ENCODE measurements at regions of chr20 and their contacts with region 1.

Region 1: DNA sequence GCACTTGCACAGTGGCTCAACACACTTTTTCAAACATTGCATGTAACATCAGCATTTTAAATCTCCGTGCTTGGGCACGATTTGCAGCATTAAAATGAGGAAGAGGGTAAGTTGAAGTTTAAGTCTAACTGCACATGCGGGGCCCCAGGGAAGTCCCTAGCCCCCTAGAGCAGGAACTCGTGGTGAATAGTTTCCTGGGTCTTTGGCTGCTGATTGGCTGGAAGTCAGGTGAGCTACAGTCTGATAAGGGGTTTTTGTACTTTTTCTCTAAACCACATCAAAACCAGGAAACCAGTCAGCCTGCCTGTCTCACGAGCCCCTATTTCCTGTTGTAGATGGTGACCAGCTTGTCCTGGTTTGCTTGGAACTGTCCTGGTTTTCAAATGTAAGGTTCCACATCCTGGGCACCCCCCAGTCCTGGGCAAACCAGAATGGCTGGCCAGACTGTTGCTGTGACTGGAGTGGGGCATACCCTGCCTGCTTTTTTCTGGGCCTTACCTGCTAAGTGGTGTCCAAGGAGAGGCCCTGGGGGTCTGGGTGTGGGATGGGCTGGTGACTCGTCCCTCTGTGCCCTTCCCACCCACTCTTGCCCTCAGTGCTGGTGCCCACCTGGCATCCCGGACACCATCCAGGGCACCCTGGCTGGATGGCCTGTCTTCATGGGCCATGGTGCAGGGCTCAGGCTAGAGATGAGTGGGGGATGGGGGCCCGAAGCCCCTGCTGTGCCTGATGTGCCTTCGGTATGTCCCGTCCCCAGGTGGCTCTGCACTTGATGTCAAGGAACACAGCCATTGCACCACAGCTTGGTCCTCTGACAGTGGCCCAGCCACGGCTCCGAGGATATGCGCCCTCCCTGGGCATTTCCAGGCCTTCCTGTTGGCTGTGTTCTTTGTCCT is 31.8 kb downstream of the SUN5 start:
- DNase-seq: peak; percentile 31 to 96 (median 94)
- ATAC-seq: peak; percentile 90
- H3K4me3 ChIP-seq: peak overlapping the region; percentile 53
- H3K4me3 Mint-ChIP-seq: peak overlapping the region in 1 of 10 donors; percentile 54
- H3K27ac ChIP-seq: peak overlapping the region; percentile 85
- H3K27ac Mint-ChIP-seq: no peak overlapping the region
- H3K4me1 ChIP-seq: peaks cover 73 to 92% of the 10 kb centered on the region in 2 donors
- H3K4me1 Mint-ChIP-seq: peaks cover 13 to 56% (median 46%) of the 10 kb centered on the region in 7 donors
- H3K27me3 ChIP-seq: no peaks in the 10 kb centered on the region
- H3K27me3 Mint-ChIP-seq: no peaks in the 10 kb centered on the region

Region 2: DNA sequence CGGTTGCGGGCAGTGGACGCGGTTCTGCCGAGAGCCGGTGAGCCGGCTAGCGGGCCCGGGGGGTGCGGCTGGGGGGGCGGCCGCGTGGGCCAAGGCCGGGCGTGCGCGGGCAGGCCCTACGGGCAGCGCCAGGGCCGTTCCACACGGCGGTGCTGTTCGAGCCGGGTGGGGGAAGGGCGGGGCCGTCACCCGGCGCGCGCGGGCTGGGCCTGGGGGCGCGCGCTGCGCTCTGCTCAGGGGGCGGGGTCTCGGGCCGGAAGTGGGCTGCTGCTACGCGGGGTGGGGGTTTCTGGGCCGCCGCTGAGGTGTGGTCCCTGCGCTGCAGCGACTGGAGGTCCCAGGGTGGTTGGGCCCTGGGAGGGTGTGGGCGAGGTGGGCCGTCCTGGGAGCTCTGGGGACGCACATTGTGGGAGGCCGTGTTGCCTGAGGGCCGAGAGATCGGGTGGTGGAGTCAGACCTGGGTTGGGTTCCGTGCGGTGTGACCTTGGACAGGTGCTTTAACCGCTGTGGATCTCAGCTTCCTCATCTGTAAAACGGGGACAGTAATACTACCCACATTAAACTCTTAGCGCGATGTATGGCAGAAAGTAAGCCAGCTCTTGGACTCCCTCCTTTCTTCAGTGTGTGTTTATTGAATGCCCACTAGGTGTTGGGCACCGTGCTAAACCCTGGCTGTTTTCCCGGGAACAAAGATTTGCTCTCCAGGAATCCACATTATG is 152.3 kb before region 1 on chr20:
- CTCF ChIA-PET with region 1: no interaction called
- POLR2A ChIA-PET with region 1: interaction called, 3 read pairs
- intact Hi-C with region 1: loop called in 1 of 2 experiments (anchors 1 kb)
- DNase-seq: peak in 7 of 9 donors; percentile 81 to 96 (median 93)
- ATAC-seq: peak; percentile 85
- H3K4me3 ChIP-seq: peak overlapping the region; percentile 93
- H3K4me3 Mint-ChIP-seq: peak overlapping the region; percentile 89 to 99 (median 94)
- H3K27ac ChIP-seq: peak overlapping the region; percentile 85
- H3K27ac Mint-ChIP-seq: peak overlapping the region; percentile 66 to 99 (median 98)
- H3K4me1 ChIP-seq: peaks cover 22 to 34% of the 10 kb centered on the region in 2 donors
- H3K4me1 Mint-ChIP-seq: peaks cover 28 to 49% (median 44%) of the 10 kb centered on the region in 7 donors
- H3K27me3 ChIP-seq: no peaks in the 10 kb centered on the region
- H3K27me3 Mint-ChIP-seq: no peaks in the 10 kb centered on the region

Region 3: DNA sequence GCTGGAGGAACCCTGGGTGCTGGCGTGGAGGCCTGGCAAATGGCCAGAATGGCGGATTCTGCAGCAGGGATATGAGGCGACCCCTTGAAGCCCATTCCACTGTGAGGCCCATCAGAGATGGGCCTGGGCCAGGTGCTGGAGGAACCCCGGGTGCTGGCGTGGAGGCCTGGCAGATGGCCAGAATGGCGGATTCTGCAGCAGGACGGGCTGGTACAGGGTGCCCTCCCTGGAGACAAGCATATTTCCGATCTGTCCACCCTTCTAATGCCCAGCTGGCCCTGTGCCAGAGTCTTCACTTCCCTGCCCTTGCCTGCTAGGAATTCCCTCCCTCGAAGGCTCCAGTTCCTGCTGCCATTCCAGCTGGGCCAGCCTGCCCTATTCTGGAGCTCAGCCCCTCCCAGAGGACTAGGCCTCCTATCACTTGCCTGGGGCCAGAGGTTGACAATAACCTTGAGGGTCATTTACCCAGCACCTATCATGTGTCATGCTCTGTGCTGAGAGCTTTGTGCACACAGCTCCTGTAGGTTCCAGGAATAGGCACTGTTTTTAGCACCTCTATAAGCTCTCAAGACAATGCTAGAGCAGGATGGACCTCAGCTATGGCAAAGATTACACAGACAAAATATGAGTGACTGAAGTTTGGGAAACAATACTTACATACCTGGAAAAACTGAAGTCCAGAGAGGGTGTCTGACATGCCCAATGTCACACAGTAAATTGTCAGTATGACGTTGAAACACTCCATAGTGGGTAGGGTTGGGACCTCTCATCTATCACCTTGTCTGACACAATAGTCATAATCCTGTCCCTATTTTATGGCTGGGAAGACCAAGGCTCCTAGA is 10.4 kb after region 1 on chr20:
- CTCF ChIA-PET with region 1: interaction called, 4 read pairs
- POLR2A ChIA-PET with region 1: interaction called, 61 read pairs
- intact Hi-C with region 1: no loop called
- DNase-seq: no peak
- ATAC-seq: no peak
- H3K4me3 ChIP-seq: no peak overlapping the region
- H3K4me3 Mint-ChIP-seq: no peak overlapping the region
- H3K27ac ChIP-seq: no peak overlapping the region
- H3K27ac Mint-ChIP-seq: peak overlapping the region in 6 of 9 donors; percentile 40 to 78 (median 57)
- H3K4me1 ChIP-seq: peaks cover 0 to 2% of the 10 kb centered on the region in 2 donors
- H3K4me1 Mint-ChIP-seq: peaks cover 3 to 56% (median 50%) of the 10 kb centered on the region in 7 donors
- H3K27me3 ChIP-seq: no peaks in the 10 kb centered on the region
- H3K27me3 Mint-ChIP-seq: no peaks in the 10 kb centered on the region

Region 4: GRCh38 chr20:32991383-32991782 is 19.0 kb after region 1 on chr20:
- CTCF ChIA-PET with region 1: no interaction called
- POLR2A ChIA-PET with region 1: interaction called, 61 read pairs
- intact Hi-C with region 1: loop called in 1 of 2 experiments (anchors 2 kb)
- DNase-seq: peak in 3 of 9 donors; percentile 16 to 34 (median 18)
- ATAC-seq: no peak
- H3K4me3 ChIP-seq: no peak overlapping the region
- H3K4me3 Mint-ChIP-seq: peak overlapping the region in 7 of 10 donors; percentile 27 to 68 (median 54)
- H3K27ac ChIP-seq: no peak overlapping the region
- H3K27ac Mint-ChIP-seq: peak overlapping the region in 7 of 9 donors; percentile 26 to 86 (median 54)
- H3K4me1 ChIP-seq: peaks cover 0 to 33% of the 10 kb centered on the region in 2 donors
- H3K4me1 Mint-ChIP-seq: peaks cover 6 to 54% (median 44%) of the 10 kb centered on the region in 7 donors
- H3K27me3 ChIP-seq: no peaks in the 10 kb centered on the region
- H3K27me3 Mint-ChIP-seq: peaks cover 0 to 2% (median 0%) of the 10 kb centered on the region in 5 donors

Region 5: DNA sequence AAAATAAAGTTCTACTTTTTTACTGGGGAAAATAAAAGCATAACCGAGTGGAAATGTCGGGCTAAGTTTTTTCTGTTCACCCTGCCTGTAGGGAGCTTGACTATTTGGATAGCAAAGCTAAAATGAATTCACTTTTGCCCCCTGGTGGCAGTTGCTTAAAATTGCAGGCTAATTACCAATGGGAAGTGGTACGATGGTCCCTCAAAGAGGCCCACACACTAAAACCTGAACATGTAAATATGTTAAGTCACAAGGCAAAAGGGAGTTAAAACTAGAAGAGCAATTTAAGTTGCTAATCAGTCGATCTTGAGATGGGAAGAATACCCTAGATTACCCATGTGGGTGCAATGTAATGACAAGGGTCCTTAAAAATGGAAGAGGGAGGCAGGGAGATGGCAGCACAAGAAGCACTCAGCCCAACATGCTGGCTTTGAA is 32.7 kb after region 1 on chr20:
- CTCF ChIA-PET with region 1: interaction called, 19 read pairs
- POLR2A ChIA-PET with region 1: interaction called, 3 read pairs
- intact Hi-C with region 1: loop called in 1 of 2 experiments (anchors 1 kb)
- DNase-seq: peak in 6 of 9 donors; percentile 7 to 41 (median 35)
- ATAC-seq: no peak
- H3K4me3 ChIP-seq: no peak overlapping the region
- H3K4me3 Mint-ChIP-seq: peak overlapping the region in 1 of 10 donors; percentile 38
- H3K27ac ChIP-seq: no peak overlapping the region
- H3K27ac Mint-ChIP-seq: peak overlapping the region in 2 of 9 donors; percentile 42 to 63
- H3K4me1 ChIP-seq: peaks cover 0 to 20% of the 10 kb centered on the region in 2 donors
- H3K4me1 Mint-ChIP-seq: peaks cover 3 to 56% (median 34%) of the 10 kb centered on the region in 7 donors
- H3K27me3 ChIP-seq: no peaks in the 10 kb centered on the region
- H3K27me3 Mint-ChIP-seq: no peaks in the 10 kb centered on the region

Region 6: GRCh38 chr20:33062105-33062824 is 89.8 kb after region 1 on chr20:
- CTCF ChIA-PET with region 1: no interaction called
- POLR2A ChIA-PET with region 1: no interaction called
- intact Hi-C with region 1: no loop called
- DNase-seq: no peak
- ATAC-seq: no peak
- H3K4me3 ChIP-seq: no peak overlapping the region
- H3K4me3 Mint-ChIP-seq: peak overlapping the region in 1 of 10 donors; percentile 34
- H3K27ac ChIP-seq: no peak overlapping the region
- H3K27ac Mint-ChIP-seq: peak overlapping the region in 1 of 9 donors; percentile 25
- H3K4me1 ChIP-seq: no peaks in the 10 kb centered on the region
- H3K4me1 Mint-ChIP-seq: peaks cover 0 to 12% (median 8%) of the 10 kb centered on the region in 7 donors
- H3K27me3 ChIP-seq: no peaks in the 10 kb centered on the region
- H3K27me3 Mint-ChIP-seq: no peaks in the 10 kb centered on the region

Measured in naive thymus-derived CD4-positive, alpha-beta T cell (primary cell).